Breast epithelium (tissue), 4 donors: ENCODE measurements at regions of chr15 and their contacts with region 1.

Region 1: GRCh38 chr15:26179906-26180305 is 316.8 kb upstream of the ATP10A start:
- DNase-seq: no peak
- H3K4me3 ChIP-seq: no peak overlapping the region
- H3K27ac ChIP-seq: no peak overlapping the region
- H3K4me1 ChIP-seq: no peaks in the 10 kb centered on the region
- H3K27me3 ChIP-seq: no peaks in the 10 kb centered on the region
- CTCF ChIP-seq: no peak
- POLR2A ChIP-seq: no peak

Region 2: DNA sequence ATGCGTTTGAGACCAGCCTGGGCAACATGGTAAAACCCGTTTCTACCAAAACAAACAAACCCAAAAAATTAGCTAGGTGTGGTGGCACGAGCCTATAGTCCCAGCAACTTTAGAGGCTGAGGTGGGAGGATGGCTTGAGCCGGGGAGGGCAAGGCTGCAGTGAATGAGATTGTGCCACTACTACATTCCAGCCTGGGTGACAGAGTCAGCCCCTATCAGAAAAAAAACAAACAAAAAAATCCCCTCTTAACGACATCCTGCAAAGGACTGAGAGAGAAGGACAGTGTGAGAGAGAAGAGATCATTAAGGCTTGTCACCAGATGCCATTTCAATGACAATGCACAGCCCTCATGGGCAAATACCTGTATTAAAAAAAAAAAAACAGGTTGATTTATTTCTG is 50.1 kb before region 1 on chr15:
- intact Hi-C with region 1: loop called (anchors 2 kb)
- DNase-seq: no peak
- H3K4me3 ChIP-seq: no peak overlapping the region
- H3K27ac ChIP-seq: no peak overlapping the region
- H3K4me1 ChIP-seq: no peaks in the 10 kb centered on the region
- H3K27me3 ChIP-seq: peaks cover 0 to 7% of the 10 kb centered on the region in 2 donors
- CTCF ChIP-seq: no peak
- POLR2A ChIP-seq: no peak

Region 3: DNA sequence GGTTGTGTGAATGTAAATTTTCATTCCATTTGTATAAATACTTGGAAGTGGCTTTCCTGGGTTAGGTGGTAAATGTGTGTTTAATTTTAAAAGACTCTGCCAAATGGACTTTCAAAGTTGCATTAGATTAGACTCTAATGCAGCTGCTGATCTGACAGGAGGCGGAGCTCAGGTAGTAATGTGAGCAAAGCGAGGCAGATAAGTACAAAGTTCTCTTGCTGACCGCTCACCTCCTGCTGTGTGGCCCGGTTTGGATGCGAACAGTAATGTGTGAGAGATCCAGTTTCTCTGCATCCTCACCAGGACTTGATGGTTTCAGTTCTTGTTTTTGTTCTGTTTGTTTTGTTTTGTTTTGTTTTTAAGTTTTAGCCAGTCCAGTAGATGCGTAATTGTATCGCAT is 652.0 kb after region 1 on chr15:
- intact Hi-C with region 1: no loop called
- DNase-seq: no peak
- H3K4me3 ChIP-seq: no peak overlapping the region
- H3K27ac ChIP-seq: no peak overlapping the region
- H3K4me1 ChIP-seq: no peaks in the 10 kb centered on the region
- H3K27me3 ChIP-seq: no peaks in the 10 kb centered on the region
- CTCF ChIP-seq: no peak
- POLR2A ChIP-seq: no peak